HAP-1 (cell line): ENCODE measurements at regions of chr9 and their contacts with region 1.

Region 1: GRCh38 chr9:90914868-90915483 is 113.4 kb downstream of the SYK start:
- DNase-seq: peak; percentile 52 to 80
- H3K4me3 ChIP-seq: no peak overlapping the region
- H3K4me1 ChIP-seq: no peaks in the 10 kb centered on the region
- H3K27me3 ChIP-seq: no peaks in the 10 kb centered on the region

Region 2: GRCh38 chr9:90307167-90307833 is 607.7 kb before region 1 on chr9:
- in situ Hi-C with region 1: no loop called
- DNase-seq: no peak
- H3K4me3 ChIP-seq: no peak overlapping the region
- H3K4me1 ChIP-seq: no peaks in the 10 kb centered on the region
- H3K27me3 ChIP-seq: no peaks in the 10 kb centered on the region

Region 3: GRCh38 chr9:91422758-91423711 is 508.1 kb after region 1 on chr9:
- in situ Hi-C with region 1: loop called (anchors 25 kb)
- DNase-seq: peak; percentile 54 to 78
- H3K4me3 ChIP-seq: peak overlapping the region; percentile 51
- H3K4me1 ChIP-seq: no peaks in the 10 kb centered on the region; the same call in 1 of the 2 replicates
- H3K27me3 ChIP-seq: peaks cover 10% of the 10 kb centered on the region; the same call in 1 of the 2 replicates

Region 4: DNA sequence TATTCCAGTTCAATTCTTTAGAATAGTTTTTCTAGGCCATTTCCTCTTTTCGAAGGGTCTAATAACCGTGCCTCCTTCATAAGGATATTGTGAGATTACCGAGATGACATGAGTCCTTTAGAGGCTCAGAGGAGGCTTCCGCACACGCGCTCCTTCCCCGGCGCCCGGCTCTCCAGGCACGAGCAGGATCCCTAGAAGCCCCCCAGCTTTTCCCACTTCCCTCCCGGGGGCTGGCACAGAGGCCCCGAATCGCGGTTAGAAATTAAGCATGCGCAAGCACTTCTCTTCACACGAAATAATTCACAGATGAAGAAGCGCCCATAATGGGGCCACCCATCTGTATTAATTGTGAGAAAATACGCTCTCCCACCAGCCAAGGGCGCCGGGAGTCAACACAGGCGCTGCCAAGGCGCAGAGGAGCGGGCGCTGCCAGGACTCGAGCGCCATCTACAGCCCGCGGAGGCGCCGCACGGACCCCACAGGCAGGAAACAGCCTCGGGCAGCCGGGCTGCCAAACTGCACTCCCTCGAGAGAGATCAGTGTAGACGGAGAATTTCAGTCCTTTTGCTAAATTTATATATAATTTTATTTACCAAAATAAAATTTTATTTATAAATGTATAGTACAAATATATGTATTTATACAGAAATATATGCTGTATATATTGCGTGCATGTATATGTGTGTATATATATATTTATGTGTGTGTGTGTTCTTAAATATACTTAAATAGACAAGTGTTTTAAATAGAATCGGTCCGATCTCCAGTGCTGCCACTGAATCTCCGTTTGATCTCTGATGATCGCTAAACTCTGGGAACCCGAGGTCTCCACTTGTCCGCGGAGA is 766.7 kb after region 1 on chr9:
- in situ Hi-C with region 1: loop called (anchors 5 kb)
- DNase-seq: peak; percentile 74 to 88
- H3K4me3 ChIP-seq: no peak overlapping the region; the same call in 1 of the 2 replicates
- H3K4me1 ChIP-seq: peaks cover 12% of the 10 kb centered on the region
- H3K27me3 ChIP-seq: no peaks in the 10 kb centered on the region

Region 5: DNA sequence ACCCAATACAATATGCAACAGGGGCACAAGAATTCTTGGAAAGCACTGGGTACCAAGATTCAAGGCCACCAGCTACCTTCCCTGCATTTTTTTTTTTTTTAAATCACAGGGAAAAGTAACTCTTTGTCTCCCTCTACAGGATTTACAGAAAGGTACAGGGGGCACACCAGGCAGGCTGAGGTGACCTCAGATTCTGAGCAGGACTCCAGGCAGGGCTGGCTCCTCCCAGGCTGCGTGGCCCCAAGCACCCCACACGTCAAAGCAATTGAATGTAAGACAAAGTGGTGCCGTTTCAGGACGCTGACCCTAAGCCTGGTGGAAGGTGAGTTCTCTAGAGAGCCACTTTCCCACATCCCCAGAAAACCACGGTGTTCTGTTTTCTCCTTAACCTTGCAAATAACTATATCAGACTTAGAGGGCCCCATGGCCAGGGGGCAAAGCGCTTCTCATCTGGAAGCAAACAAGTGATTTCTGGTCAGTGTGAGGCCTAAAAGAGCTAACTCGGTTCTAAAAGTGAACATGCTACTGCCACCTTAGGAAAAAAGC is 812.4 kb after region 1 on chr9:
- in situ Hi-C with region 1: loop called (anchors 10 kb)
- DNase-seq: peak; percentile 53 to 57
- H3K4me3 ChIP-seq: no peak overlapping the region
- H3K4me1 ChIP-seq: peaks cover 4% of the 10 kb centered on the region
- H3K27me3 ChIP-seq: no peaks in the 10 kb centered on the region